SK-N-SH (cell line): ENCODE measurements at regions of chr15 and their contacts with region 1.

Region 1: GRCh38 chr15:98779463-98780071 is 131.2 kb downstream of the IGF1R start:
- DNase-seq: peak; percentile 76
- H3K4me3 ChIP-seq: peak overlapping the region in 1 of 2 experiments; percentile 25; a peak in 1 of 4 replicates
- H3K27ac ChIP-seq: no peak overlapping the region
- H3K4me1 ChIP-seq: peaks cover 0 to 5% of the 10 kb centered on the region in 2 experiments; a peak in 1 of 4 replicates
- H3K27me3 ChIP-seq: no peaks in the 10 kb centered on the region
- CTCF ChIP-seq: peak; percentile 94
- EP300 ChIP-seq: no peak
- RAD21 ChIP-seq: peak; percentile 84

Region 2: GRCh38 chr15:98647774-98648653 is 131.6 kb before region 1 on chr15 and contains the start of gene IGF1R:
- CTCF ChIA-PET with region 1: interaction called, 19 read pairs
- POLR2A ChIA-PET with region 1: no interaction called
- DNase-seq: peak; percentile 94
- H3K4me3 ChIP-seq: peak within 1 kb of the TSS; percentile 78 to 92
- H3K27ac ChIP-seq: peak within 1 kb of the TSS; percentile 76 to 89
- H3K4me1 ChIP-seq: peaks cover 4 to 5% of the 10 kb centered on the region in 2 experiments; a peak in 3 of 4 replicates
- H3K27me3 ChIP-seq: peaks cover 9% of the 10 kb centered on the region; the same call in 1 of the 2 replicates
- CTCF ChIP-seq: no peak
- EP300 ChIP-seq: no peak
- RAD21 ChIP-seq: no peak
- polyA plus RNA-seq, gene IGF1R: 6.4 and 9.5 TPM in 2 replicates

Region 3: GRCh38 chr15:98765610-98766009 is 14.0 kb before region 1 on chr15:
- CTCF ChIA-PET with region 1: interaction called, 12 read pairs
- POLR2A ChIA-PET with region 1: no interaction called
- DNase-seq: no peak
- H3K4me3 ChIP-seq: no peak overlapping the region
- H3K27ac ChIP-seq: no peak overlapping the region; a peak in 1 of 4 replicates
- H3K4me1 ChIP-seq: peaks cover 4% of the 10 kb centered on the region in 2 experiments; a peak in 1 of 4 replicates
- H3K27me3 ChIP-seq: no peaks in the 10 kb centered on the region
- CTCF ChIP-seq: no peak
- EP300 ChIP-seq: no peak
- RAD21 ChIP-seq: no peak

Region 4: DNA sequence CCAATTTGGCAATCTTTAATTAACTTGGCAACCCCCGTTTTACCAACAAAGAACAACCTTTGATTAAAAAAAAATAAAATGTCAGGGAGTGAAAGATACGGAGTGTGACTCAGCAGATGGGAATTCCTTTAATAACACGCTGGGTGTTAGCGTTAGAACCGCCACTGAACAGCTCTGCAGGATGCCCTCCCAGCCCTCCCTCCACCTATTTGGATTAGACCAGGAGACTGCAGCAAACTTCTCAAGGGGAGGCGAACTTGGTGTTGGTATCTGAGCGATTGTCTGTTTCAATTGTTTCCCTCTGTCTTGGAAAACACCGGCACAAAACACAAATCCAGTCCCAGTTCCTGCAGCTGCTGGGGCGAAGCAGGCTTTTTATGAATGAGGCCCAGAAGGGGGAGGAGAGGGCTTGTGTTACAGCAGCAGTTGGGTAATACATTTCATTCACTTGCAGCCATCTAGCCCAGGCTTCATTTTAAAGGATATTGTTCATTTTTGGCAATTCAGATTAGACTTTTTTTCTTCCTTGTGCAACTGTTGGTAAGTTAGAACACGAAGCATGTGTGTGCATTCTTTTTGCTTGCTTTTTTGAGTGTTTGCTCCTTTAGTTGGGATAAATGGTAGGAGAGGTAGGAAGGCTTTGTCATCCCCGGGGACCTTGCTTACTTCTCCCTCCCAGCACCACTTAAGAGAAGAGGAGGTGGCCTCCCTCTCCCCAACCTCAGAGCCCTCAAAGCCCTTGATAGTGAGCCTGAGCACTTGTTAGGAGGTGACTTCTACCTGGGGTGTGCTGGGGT is 21.1 kb after region 1 on chr15:
- CTCF ChIA-PET with region 1: interaction called, 77 read pairs
- POLR2A ChIA-PET with region 1: no interaction called
- DNase-seq: peak; percentile 44
- H3K4me3 ChIP-seq: peak overlapping the region in 1 of 2 experiments; percentile 18; a peak in 1 of 4 replicates
- H3K27ac ChIP-seq: peak overlapping the region; percentile 45 to 69
- H3K4me1 ChIP-seq: peaks cover 25 to 46% of the 10 kb centered on the region in 2 experiments
- H3K27me3 ChIP-seq: no peaks in the 10 kb centered on the region
- CTCF ChIP-seq: no peak
- EP300 ChIP-seq: no peak
- RAD21 ChIP-seq: no peak

Region 5: GRCh38 chr15:98817745-98818144 is 38.2 kb after region 1 on chr15:
- CTCF ChIA-PET with region 1: no interaction called
- POLR2A ChIA-PET with region 1: no interaction called
- DNase-seq: no peak
- H3K4me3 ChIP-seq: no peak overlapping the region
- H3K27ac ChIP-seq: no peak overlapping the region
- H3K4me1 ChIP-seq: peaks cover 0 to 3% of the 10 kb centered on the region in 2 experiments; a peak in 2 of 4 replicates
- H3K27me3 ChIP-seq: no peaks in the 10 kb centered on the region
- CTCF ChIP-seq: no peak
- EP300 ChIP-seq: no peak
- RAD21 ChIP-seq: no peak

Region 6: GRCh38 chr15:98881526-98882520 is 102.3 kb after region 1 on chr15:
- CTCF ChIA-PET with region 1: interaction called, 19 read pairs
- POLR2A ChIA-PET with region 1: no interaction called
- DNase-seq: peak; percentile 67
- H3K4me3 ChIP-seq: peak overlapping the region in 1 of 2 experiments; percentile 36; a peak in 1 of 4 replicates
- H3K27ac ChIP-seq: no peak overlapping the region
- H3K4me1 ChIP-seq: peaks cover 3 to 13% of the 10 kb centered on the region in 2 experiments; a peak in 2 of 4 replicates
- H3K27me3 ChIP-seq: no peaks in the 10 kb centered on the region
- CTCF ChIP-seq: peak; percentile 75
- EP300 ChIP-seq: no peak
- RAD21 ChIP-seq: peak; percentile 68